Breast epithelium (tissue), 4 donors: ENCODE measurements at regions of chr16 and their contacts with region 1.

Region 1: DNA sequence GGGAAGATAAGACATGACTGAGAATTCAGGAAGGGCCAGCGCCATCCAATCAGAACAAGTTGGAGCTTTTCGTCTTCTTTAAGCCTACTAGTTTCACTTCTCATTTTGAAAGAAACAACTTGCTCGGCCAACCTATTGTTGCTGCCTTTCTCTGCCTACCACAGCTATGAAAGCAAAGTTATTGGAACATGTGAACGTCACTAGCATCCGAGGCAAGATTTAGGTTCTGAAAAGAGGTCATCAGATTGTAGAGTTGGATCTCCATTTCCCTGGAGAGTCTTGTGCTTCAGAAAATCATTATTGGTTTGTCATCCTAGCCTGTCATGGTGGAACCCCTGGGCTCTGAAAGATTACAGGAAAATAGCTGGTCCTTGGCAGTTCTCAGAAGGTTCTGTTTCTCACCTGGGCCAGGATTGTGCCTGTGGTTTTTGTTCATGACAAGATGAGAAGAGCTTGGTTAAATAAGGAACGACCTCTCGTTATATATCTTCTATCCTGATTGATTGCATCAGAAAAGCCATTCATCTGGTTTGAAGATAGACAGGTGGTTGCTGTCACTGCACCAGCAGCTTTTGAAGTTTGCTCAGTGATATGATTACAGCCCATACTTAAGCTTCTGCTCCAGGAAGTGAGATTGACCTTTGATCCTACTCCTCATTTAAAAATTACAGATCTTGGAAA is 25.3 kb downstream of the CDH13 start:
- DNase-seq: no peak
- H3K4me3 ChIP-seq: no peak overlapping the region
- H3K27ac ChIP-seq: no peak overlapping the region
- H3K4me1 ChIP-seq: peaks cover 0 to 8% of the 10 kb centered on the region in 2 donors
- H3K27me3 ChIP-seq: no peaks in the 10 kb centered on the region
- CTCF ChIP-seq: no peak
- POLR2A ChIP-seq: no peak

Region 2: GRCh38 chr16:82116535-82116934 is 535.5 kb before region 1 on chr16:
- intact Hi-C with region 1: no loop called
- DNase-seq: no peak
- H3K4me3 ChIP-seq: no peak overlapping the region
- H3K27ac ChIP-seq: no peak overlapping the region
- H3K4me1 ChIP-seq: no peaks in the 10 kb centered on the region
- H3K27me3 ChIP-seq: no peaks in the 10 kb centered on the region
- CTCF ChIP-seq: no peak
- POLR2A ChIP-seq: no peak

Region 3: DNA sequence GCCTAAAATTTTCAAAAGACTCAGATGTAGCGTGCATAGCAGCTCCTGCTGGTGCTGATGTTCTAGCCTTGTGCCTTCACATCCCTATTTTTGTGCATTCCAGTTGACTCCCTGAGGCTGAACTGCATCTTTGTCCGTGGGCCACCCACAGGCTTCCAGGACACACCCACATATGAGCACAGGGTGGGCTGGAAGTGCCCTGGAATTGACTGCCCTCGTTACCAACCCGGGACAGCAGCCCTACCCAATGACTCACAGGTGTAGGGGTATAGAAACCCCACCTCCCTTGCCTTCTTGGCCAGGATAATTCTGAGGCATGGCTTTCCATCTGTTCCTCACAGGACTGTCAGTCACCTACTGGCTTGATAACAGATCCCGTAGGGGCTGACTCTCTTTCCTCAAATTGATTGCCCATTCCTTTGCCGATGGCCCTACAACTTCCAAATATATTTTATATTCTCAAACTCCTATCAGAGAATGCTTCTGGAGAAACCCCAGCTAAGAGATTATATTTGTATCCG is 91.2 kb before region 1 on chr16:
- intact Hi-C with region 1: no loop called
- DNase-seq: no peak
- H3K4me3 ChIP-seq: no peak overlapping the region
- H3K27ac ChIP-seq: no peak overlapping the region
- H3K4me1 ChIP-seq: no peaks in the 10 kb centered on the region
- H3K27me3 ChIP-seq: no peaks in the 10 kb centered on the region
- CTCF ChIP-seq: no peak
- POLR2A ChIP-seq: no peak

Region 4: GRCh38 chr16:82626791-82627261 is 25.2 kb before region 1 on chr16 and contains the start of gene CDH13:
- intact Hi-C with region 1: loop called (anchors 1 kb)
- DNase-seq: peak in 1 of 2 donors; percentile 21
- H3K4me3 ChIP-seq: peak within 1 kb of the TSS; percentile 53 to 72 (median 61)
- H3K27ac ChIP-seq: peak within 1 kb of the TSS; percentile 52 to 55
- H3K4me1 ChIP-seq: no peaks in the 10 kb centered on the region
- H3K27me3 ChIP-seq: peaks cover 0 to 46% of the 10 kb centered on the region in 2 donors
- CTCF ChIP-seq: no peak
- POLR2A ChIP-seq: no peak
- total RNA-seq, gene CDH13: 6.0 to 13.1 (median 11.5) TPM